Naive thymus-derived CD4-positive, alpha-beta T cell (primary cell): ENCODE measurements at regions of chr6 and their contacts with region 1.

Region 1: DNA sequence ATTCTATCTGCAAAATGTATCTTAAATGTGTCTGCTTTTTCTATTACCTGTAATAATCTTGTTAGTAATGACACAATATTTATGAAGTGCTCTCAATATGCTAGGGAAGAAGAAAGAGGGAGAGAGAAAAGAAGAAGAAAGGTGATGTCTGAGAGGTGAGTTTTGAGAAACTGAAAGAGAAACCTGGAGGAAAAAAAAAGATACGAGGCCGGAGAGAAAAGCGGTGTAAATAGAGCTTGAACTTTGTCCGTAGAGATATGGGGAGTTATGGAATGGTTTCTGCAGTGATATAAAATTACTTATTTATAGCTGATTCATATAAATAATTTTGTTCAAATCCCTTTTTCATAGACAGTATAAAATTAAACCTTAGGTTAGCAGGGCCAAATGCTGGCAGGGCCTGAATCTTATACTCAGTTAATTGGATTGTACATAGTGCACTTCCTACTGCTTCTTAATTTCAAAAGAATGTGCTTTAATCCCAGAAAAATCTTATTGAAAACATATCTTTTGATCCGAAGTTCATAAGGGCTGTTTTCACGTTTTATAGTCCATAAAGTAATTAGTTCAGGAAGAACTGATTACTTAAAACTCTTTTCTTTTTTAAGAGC is 43.0 kb downstream of the MYB start:
- DNase-seq: peak in 6 of 9 donors; percentile 16 to 40 (median 32)
- ATAC-seq: peak; percentile 32
- H3K4me3 ChIP-seq: peak overlapping the region; percentile 33
- H3K4me3 Mint-ChIP-seq: peak overlapping the region; percentile 54 to 90 (median 86)
- H3K27ac ChIP-seq: peak overlapping the region; percentile 64
- H3K27ac Mint-ChIP-seq: peak overlapping the region; percentile 90 to 96 (median 92)
- H3K4me1 ChIP-seq: peaks cover 0 to 3% of the 10 kb centered on the region in 2 donors
- H3K4me1 Mint-ChIP-seq: peaks cover 13 to 34% (median 21%) of the 10 kb centered on the region in 7 donors
- H3K27me3 ChIP-seq: no peaks in the 10 kb centered on the region
- H3K27me3 Mint-ChIP-seq: no peaks in the 10 kb centered on the region

Region 2: GRCh38 chr6:133748628-133749027 is 1475.5 kb before region 1 on chr6:
- CTCF ChIA-PET with region 1: no interaction called
- POLR2A ChIA-PET with region 1: no interaction called
- intact Hi-C with region 1: no loop called
- DNase-seq: no peak
- ATAC-seq: no peak
- H3K4me3 ChIP-seq: no peak overlapping the region
- H3K4me3 Mint-ChIP-seq: no peak overlapping the region
- H3K27ac ChIP-seq: no peak overlapping the region
- H3K27ac Mint-ChIP-seq: no peak overlapping the region
- H3K4me1 ChIP-seq: no peaks in the 10 kb centered on the region
- H3K4me1 Mint-ChIP-seq: no peaks in the 10 kb centered on the region
- H3K27me3 ChIP-seq: no peaks in the 10 kb centered on the region
- H3K27me3 Mint-ChIP-seq: peaks cover 0 to 10% (median 6%) of the 10 kb centered on the region in 5 donors

Region 3: GRCh38 chr6:135212020-135212806 is 11.9 kb before region 1 on chr6:
- CTCF ChIA-PET with region 1: interaction called, 3 read pairs
- POLR2A ChIA-PET with region 1: interaction called, 6 read pairs
- intact Hi-C with region 1: loop called (anchors 1 kb)
- DNase-seq: no peak
- ATAC-seq: no peak
- H3K4me3 ChIP-seq: peak overlapping the region; percentile 2
- H3K4me3 Mint-ChIP-seq: peak overlapping the region; percentile 5 to 82 (median 66)
- H3K27ac ChIP-seq: no peak overlapping the region
- H3K27ac Mint-ChIP-seq: peak overlapping the region; percentile 9 to 88 (median 69)
- H3K4me1 ChIP-seq: peaks cover 0 to 26% of the 10 kb centered on the region in 2 donors
- H3K4me1 Mint-ChIP-seq: peaks cover 20 to 48% (median 41%) of the 10 kb centered on the region in 7 donors
- H3K27me3 ChIP-seq: no peaks in the 10 kb centered on the region
- H3K27me3 Mint-ChIP-seq: no peaks in the 10 kb centered on the region